ENCODE measurements at regions of chr11 and their contacts with region 1.

Region 1: GRCh38 chr11:61999141-61999975 is 31.9 kb upstream of the FTH1 start:
- DNase-seq: peak; percentile 64
- ATAC-seq: no peak
- H3K4me3 ChIP-seq: no peak overlapping the region
- H3K27ac ChIP-seq: peak overlapping the region; percentile 92
- H3K4me1 ChIP-seq: peaks cover 94% of the 10 kb centered on the region
- H3K27me3 ChIP-seq: no peaks in the 10 kb centered on the region
- CTCF ChIP-seq: no peak
- EP300 ChIP-seq: peak in 1 of 2 experiments; percentile 53; a peak in 1 of 4 replicates
- POLR2A ChIP-seq: 0 out of 4 replicates have a peak, but pooled peaks of 1 of the 2 experiments have one; percentile 40
- RAD21 ChIP-seq: no peak

Region 2: GRCh38 chr11:61891331-61892084 is 107.8 kb before region 1 on chr11 and contains the start of gene FADS3:
- CTCF ChIA-PET with region 1: no interaction called
- POLR2A ChIA-PET with region 1: no interaction called
- in situ Hi-C with region 1: no loop called
- intact Hi-C with region 1: no loop called
- DNase-seq: peak; percentile 77
- ATAC-seq: peak; percentile 86
- H3K4me3 ChIP-seq: peak within 1 kb of the TSS; percentile 60 to 86 (median 68)
- H3K27ac ChIP-seq: no peak within 1 kb of the TSS
- H3K4me1 ChIP-seq: peaks cover 14% of the 10 kb centered on the region
- H3K27me3 ChIP-seq: no peaks in the 10 kb centered on the region
- CTCF ChIP-seq: 0 out of 2 replicates have a peak, but pooled peaks have one; percentile 18
- EP300 ChIP-seq: no peak
- POLR2A ChIP-seq: no peak
- RAD21 ChIP-seq: peak; percentile 23; the same call in 1 of the 2 replicates
- total RNA-seq, gene FADS3: 4.5 and 13.4 TPM in 2 replicates

Region 3: GRCh38 chr11:61978703-61979661 is 20.4 kb before region 1 on chr11:
- CTCF ChIA-PET with region 1: no interaction called
- POLR2A ChIA-PET with region 1: interaction called, 518 read pairs
- in situ Hi-C with region 1: no loop called
- intact Hi-C with region 1: loop called (anchors 2 kb)
- DNase-seq: no peak
- ATAC-seq: no peak
- H3K4me3 ChIP-seq: no peak overlapping the region
- H3K27ac ChIP-seq: peak overlapping the region; percentile 19
- H3K4me1 ChIP-seq: peaks cover 99% of the 10 kb centered on the region
- H3K27me3 ChIP-seq: no peaks in the 10 kb centered on the region
- CTCF ChIP-seq: no peak
- EP300 ChIP-seq: no peak
- POLR2A ChIP-seq: no peak
- RAD21 ChIP-seq: no peak

Region 4: GRCh38 chr11:61985885-61986345 is 13.4 kb before region 1 on chr11:
- CTCF ChIA-PET with region 1: no interaction called
- POLR2A ChIA-PET with region 1: interaction called, 518 read pairs
- in situ Hi-C with region 1: no loop called
- intact Hi-C with region 1: loop called (anchors 2 kb)
- DNase-seq: no peak
- ATAC-seq: no peak
- H3K4me3 ChIP-seq: no peak overlapping the region
- H3K27ac ChIP-seq: peak overlapping the region; percentile 43
- H3K4me1 ChIP-seq: peaks cover 62% of the 10 kb centered on the region
- H3K27me3 ChIP-seq: no peaks in the 10 kb centered on the region
- CTCF ChIP-seq: no peak
- EP300 ChIP-seq: no peak
- POLR2A ChIP-seq: no peak
- RAD21 ChIP-seq: no peak

Region 5: DNA sequence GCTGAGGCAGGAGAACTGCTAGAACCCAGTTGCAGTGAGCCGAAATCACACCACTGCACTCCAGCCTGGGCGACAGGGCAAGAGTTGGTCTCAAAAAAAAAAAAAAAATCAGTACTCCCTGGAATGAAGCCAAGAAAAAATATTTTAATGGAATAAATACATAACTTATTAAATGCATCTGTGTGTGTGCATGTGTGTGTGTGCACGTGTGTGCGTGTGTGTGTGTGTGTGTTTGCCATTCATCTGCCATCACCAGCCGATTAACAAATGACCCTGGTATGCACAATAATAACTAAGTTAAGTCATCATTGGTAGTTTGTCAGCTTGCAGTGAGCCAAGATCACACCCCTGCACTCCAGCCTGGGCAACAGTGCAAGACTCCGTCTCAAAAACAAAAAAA is 384.5 kb after region 1 on chr11:
- CTCF ChIA-PET with region 1: no interaction called
- POLR2A ChIA-PET with region 1: no interaction called
- in situ Hi-C with region 1: no loop called
- intact Hi-C with region 1: no loop called
- DNase-seq: no peak
- ATAC-seq: no peak
- H3K4me3 ChIP-seq: no peak overlapping the region
- H3K27ac ChIP-seq: no peak overlapping the region
- H3K4me1 ChIP-seq: peaks cover 25% of the 10 kb centered on the region
- H3K27me3 ChIP-seq: no peaks in the 10 kb centered on the region
- CTCF ChIP-seq: no peak
- EP300 ChIP-seq: no peak
- POLR2A ChIP-seq: no peak
- RAD21 ChIP-seq: no peak

Measured in HepG2 (cell line).